ENCODE measurements at regions of chr10 and their contacts with region 1.

Region 1: DNA sequence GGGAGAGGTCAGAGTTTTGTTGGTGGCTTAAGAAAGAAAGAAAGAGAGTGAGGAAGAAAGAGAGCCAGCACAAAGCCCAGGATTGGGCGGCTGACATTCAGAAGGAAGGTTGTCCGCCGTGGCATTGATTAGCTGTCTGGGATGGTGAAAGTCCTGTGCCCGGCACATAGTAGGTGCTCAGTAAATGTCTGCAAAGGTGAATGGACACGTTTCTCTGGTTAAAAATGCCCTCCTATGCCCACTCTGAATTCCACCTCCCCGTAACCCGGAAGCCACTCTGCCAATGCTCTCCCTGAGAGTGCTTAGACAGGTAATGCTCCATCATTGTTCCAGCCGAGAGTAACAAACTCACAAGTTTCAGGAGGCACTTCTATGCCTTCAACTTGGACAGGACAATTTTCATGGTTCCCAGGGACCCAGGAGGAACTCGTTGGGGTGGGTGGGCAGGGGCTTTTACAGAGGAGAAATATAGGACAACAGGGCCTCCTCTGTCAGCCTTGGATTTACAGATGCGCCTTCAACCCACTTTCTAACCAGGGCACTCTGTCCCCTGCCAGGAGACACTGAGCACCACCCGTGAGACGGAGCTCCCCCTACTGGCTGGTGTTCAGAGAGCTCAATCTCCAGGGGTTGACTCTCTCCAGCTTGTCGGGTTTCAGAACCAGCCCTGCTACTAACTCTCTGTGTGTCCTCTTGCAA is 411.5 kb upstream of the ZMIZ1 start:
- DNase-seq: peak; percentile 60 to 74
- ATAC-seq: peak; percentile 94 to 96
- H3K4me3 ChIP-seq: no peak overlapping the region
- H3K27ac ChIP-seq: no peak overlapping the region
- H3K4me1 ChIP-seq: no peaks in the 10 kb centered on the region
- H3K27me3 ChIP-seq: no peaks in the 10 kb centered on the region
- CTCF ChIP-seq: peak; percentile 32 to 79 (median 57)
- POLR2A ChIP-seq: no peak

Region 2: GRCh38 chr10:78053211-78053868 is 604.0 kb before region 1 on chr10:
- in situ Hi-C with region 1: loop called in 2 of 4 experiments (anchors 25 kb)
- intact Hi-C with region 1: no loop called
- DNase-seq: no peak
- ATAC-seq: no peak
- H3K4me3 ChIP-seq: no peak overlapping the region
- H3K27ac ChIP-seq: no peak overlapping the region
- H3K4me1 ChIP-seq: no peaks in the 10 kb centered on the region
- H3K27me3 ChIP-seq: no peaks in the 10 kb centered on the region
- CTCF ChIP-seq: no peak
- POLR2A ChIP-seq: no peak

Region 3: GRCh38 chr10:78211561-78212051 is 445.7 kb before region 1 on chr10:
- in situ Hi-C with region 1: loop called in 1 of 4 experiments (anchors 25 kb)
- intact Hi-C with region 1: loop called (anchors 1 kb)
- DNase-seq: no peak
- ATAC-seq: no peak
- H3K4me3 ChIP-seq: no peak overlapping the region
- H3K27ac ChIP-seq: no peak overlapping the region
- H3K4me1 ChIP-seq: peaks cover 13 to 20% of the 10 kb centered on the region in 2 donors
- H3K27me3 ChIP-seq: no peaks in the 10 kb centered on the region
- CTCF ChIP-seq: peak in 3 of 5 experiments; percentile 22 to 30 (median 28)
- POLR2A ChIP-seq: no peak

Region 4: GRCh38 chr10:78231939-78232338 is 425.4 kb before region 1 on chr10:
- in situ Hi-C with region 1: loop called in 1 of 4 experiments (anchors 25 kb)
- intact Hi-C with region 1: loop called (anchors 2 kb)
- DNase-seq: peak; percentile 22 to 58
- ATAC-seq: peak; percentile 85 to 94
- H3K4me3 ChIP-seq: no peak overlapping the region
- H3K27ac ChIP-seq: no peak overlapping the region
- H3K4me1 ChIP-seq: peaks cover 0 to 10% of the 10 kb centered on the region in 2 donors
- H3K27me3 ChIP-seq: no peaks in the 10 kb centered on the region
- CTCF ChIP-seq: peak; percentile 41 to 60 (median 48)
- POLR2A ChIP-seq: no peak

Measured in gastrocnemius medialis (tissue), 4 donors.